A549 (cell line): ENCODE measurements at regions of chr17 and their contacts with region 1.

Region 1: GRCh38 chr17:30344283-30345088 is 10.6 kb upstream of the TMIGD1 start:
- DNase-seq: peak in 1 of 2 experiments; percentile 85
- ATAC-seq: peak; percentile 66 to 70
- H3K4me3 ChIP-seq: no peak overlapping the region
- H3K27ac ChIP-seq: peak overlapping the region; percentile 77 to 82
- H3K4me1 ChIP-seq: peaks cover 44% of the 10 kb centered on the region
- CTCF ChIP-seq: no peak
- EP300 ChIP-seq: no peak; a peak in 1 of 5 replicates
- POLR2A ChIP-seq: no peak
- RAD21 ChIP-seq: no peak

Region 2: DNA sequence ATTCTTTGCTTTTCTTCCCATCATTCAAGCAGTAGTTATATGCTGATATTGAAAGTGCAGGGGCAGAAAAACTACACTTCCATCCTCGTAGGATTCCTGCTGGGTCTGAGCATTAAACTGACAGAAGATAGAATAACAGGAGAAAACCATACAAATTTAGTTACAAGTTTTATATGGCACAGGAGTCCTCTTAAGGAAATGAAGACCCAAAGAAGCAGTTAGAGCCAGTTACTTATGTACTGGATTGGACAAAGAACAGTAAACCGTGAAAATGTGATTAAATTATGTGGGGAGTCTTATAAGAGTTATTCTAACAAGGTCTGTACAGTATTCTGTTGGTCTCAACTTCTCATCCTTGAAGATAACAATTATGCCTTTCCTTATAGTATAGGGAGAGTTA is 309.1 kb before region 1 on chr17:
- CTCF ChIA-PET with region 1: no interaction called
- POLR2A ChIA-PET with region 1: no interaction called
- DNase-seq: no peak
- ATAC-seq: no peak
- H3K4me3 ChIP-seq: no peak overlapping the region
- H3K27ac ChIP-seq: no peak overlapping the region
- H3K4me1 ChIP-seq: no peaks in the 10 kb centered on the region
- CTCF ChIP-seq: no peak
- EP300 ChIP-seq: no peak
- POLR2A ChIP-seq: no peak
- RAD21 ChIP-seq: no peak

Region 3: GRCh38 chr17:30299000-30299399 is 45.5 kb before region 1 on chr17:
- CTCF ChIA-PET with region 1: interaction called, 13 read pairs
- POLR2A ChIA-PET with region 1: no interaction called
- DNase-seq: peak in 1 of 2 experiments; percentile 34
- ATAC-seq: 0 out of 6 replicates have a peak, but pooled peaks of 1 of the 2 experiments have one; percentile 29
- H3K4me3 ChIP-seq: no peak overlapping the region
- H3K27ac ChIP-seq: no peak overlapping the region
- H3K4me1 ChIP-seq: no peaks in the 10 kb centered on the region
- CTCF ChIP-seq: peak; percentile 67
- EP300 ChIP-seq: no peak
- POLR2A ChIP-seq: no peak
- RAD21 ChIP-seq: peak; percentile 44 to 62

Region 4: DNA sequence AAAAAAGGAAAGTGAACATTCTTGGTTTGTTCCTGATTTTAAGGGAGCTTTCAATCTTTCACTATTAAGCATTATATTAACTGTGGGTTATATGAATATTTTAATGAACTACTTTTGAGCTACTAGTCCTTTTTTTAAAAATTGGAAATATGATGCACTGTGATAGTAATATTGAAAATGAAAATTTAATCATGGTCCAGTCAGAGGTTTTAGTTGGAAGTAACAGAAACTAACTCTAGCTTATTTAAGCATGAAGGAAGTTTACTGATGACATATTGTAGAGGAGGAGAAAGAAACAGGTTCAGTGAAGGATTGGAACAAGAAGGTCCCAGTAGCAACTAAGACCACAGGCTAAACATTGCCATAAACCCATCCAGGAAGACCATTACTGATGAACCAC is 10.2 kb after region 1 on chr17:
- CTCF ChIA-PET with region 1: interaction called, 23 read pairs
- POLR2A ChIA-PET with region 1: interaction called, 3 read pairs
- DNase-seq: no peak
- ATAC-seq: no peak
- H3K4me3 ChIP-seq: no peak overlapping the region
- H3K27ac ChIP-seq: no peak overlapping the region
- H3K4me1 ChIP-seq: peaks cover 8% of the 10 kb centered on the region; the same call in 2 of the 3 replicates
- CTCF ChIP-seq: no peak
- EP300 ChIP-seq: no peak
- POLR2A ChIP-seq: no peak
- RAD21 ChIP-seq: no peak

Region 5: GRCh38 chr17:30378824-30379302 is 34.4 kb after region 1 on chr17 and contains the start of gene CPD:
- CTCF ChIA-PET with region 1: interaction called, 35 read pairs
- POLR2A ChIA-PET with region 1: no interaction called
- DNase-seq: peak; percentile 95 to 96
- ATAC-seq: peak; percentile 95 to 97
- H3K4me3 ChIP-seq: peak within 1 kb of the TSS; percentile 88
- H3K27ac ChIP-seq: peak within 1 kb of the TSS; percentile 84 to 93
- H3K4me1 ChIP-seq: peaks cover 65% of the 10 kb centered on the region
- CTCF ChIP-seq: no peak
- EP300 ChIP-seq: no peak
- POLR2A ChIP-seq: peak; percentile 89
- RAD21 ChIP-seq: peak in 1 of 2 experiments; percentile 19; a peak in 1 of 5 replicates
- polyA plus RNA-seq, gene CPD: 83.3 and 97.2 TPM in 2 replicates

Region 6: GRCh38 chr17:30716461-30717300 is 372.2 kb after region 1 on chr17:
- CTCF ChIA-PET with region 1: interaction called, 33 read pairs
- POLR2A ChIA-PET with region 1: no interaction called
- DNase-seq: peak in 1 of 2 experiments; percentile 69
- ATAC-seq: peak; percentile 17 to 38; a peak in 4 of 6 replicates
- H3K4me3 ChIP-seq: no peak overlapping the region
- H3K27ac ChIP-seq: no peak overlapping the region
- H3K4me1 ChIP-seq: no peaks in the 10 kb centered on the region
- CTCF ChIP-seq: peak; percentile 46; the same call in 2 of the 3 replicates
- EP300 ChIP-seq: no peak
- POLR2A ChIP-seq: no peak
- RAD21 ChIP-seq: peak; percentile 52 to 54; a peak in 4 of 5 replicates